H1 (cell line): ENCODE measurements at regions of chr3 and their contacts with region 1.

Region 1: DNA sequence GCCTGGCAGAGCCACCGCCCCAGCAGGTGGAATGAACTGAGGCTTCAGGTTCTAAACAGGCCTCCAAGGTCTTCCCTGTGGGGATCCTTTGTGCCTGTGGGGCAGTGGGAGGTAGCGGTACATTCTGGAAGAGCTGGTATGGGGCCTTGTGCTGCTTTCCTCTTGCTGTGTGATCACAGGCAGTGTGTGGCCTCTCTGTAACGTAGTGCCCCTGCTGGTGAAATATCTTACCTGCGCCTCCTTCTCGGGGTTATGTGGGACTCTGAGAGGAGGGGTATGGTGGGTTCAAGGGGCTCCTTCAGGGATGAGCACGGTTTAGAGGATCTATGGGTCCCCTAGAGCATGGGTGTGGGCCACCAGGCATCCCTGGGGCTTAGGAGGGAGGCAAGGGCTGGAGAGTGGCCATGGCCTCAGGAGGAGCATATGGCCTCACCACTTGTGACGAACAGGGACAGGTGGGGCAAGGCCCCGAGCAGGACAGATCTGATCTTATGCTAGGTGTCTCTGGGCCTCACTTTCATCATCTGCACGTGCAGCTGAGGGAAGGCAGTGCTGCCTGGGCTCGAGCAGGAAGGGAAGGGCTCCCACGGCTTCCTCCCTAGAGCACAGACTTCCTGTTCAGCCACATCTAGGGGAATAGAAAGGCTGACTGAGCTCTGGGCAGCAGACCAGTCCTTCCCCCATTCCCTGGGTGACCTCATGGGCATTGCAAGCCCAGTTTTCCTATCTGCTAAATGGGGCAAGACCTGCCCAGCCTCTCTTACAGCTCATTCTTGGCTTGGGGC is 1.9 kb upstream of the ALS2CL start:
- DNase-seq: peak in 1 of 2 experiments; percentile 78
- H3K4me3 ChIP-seq: no peak overlapping the region
- H3K27ac ChIP-seq: no peak overlapping the region
- H3K4me1 ChIP-seq: peaks cover 0 to 24% (median 19%) of the 10 kb centered on the region in 4 experiments; a peak in 6 of 7 replicates
- H3K27me3 ChIP-seq: peaks cover 2 to 35% (median 21%) of the 10 kb centered on the region in 4 experiments
- CTCF ChIP-seq: peak in 2 of 3 experiments; percentile 71 to 86; a peak in 3 of 4 replicates
- EP300 ChIP-seq: no peak
- POLR2A ChIP-seq: no peak
- RAD21 ChIP-seq: peak; percentile 52 to 62

Region 2: GRCh38 chr3:46674031-46674845 is 21.1 kb before region 1 on chr3:
- CTCF ChIA-PET with region 1: interaction called, 64 read pairs
- POLR2A ChIA-PET with region 1: interaction called, 6 read pairs
- DNase-seq: no peak
- H3K4me3 ChIP-seq: no peak overlapping the region
- H3K27ac ChIP-seq: no peak overlapping the region
- H3K4me1 ChIP-seq: no peaks in the 10 kb centered on the region; a peak in 1 of 7 replicates
- H3K27me3 ChIP-seq: no peaks in the 10 kb centered on the region
- CTCF ChIP-seq: peak in 2 of 3 experiments; percentile 30 to 53; a peak in 2 of 4 replicates
- EP300 ChIP-seq: no peak
- POLR2A ChIP-seq: no peak
- RAD21 ChIP-seq: peak; percentile 1 to 35; a peak in 1 of 4 replicates

Region 3: DNA sequence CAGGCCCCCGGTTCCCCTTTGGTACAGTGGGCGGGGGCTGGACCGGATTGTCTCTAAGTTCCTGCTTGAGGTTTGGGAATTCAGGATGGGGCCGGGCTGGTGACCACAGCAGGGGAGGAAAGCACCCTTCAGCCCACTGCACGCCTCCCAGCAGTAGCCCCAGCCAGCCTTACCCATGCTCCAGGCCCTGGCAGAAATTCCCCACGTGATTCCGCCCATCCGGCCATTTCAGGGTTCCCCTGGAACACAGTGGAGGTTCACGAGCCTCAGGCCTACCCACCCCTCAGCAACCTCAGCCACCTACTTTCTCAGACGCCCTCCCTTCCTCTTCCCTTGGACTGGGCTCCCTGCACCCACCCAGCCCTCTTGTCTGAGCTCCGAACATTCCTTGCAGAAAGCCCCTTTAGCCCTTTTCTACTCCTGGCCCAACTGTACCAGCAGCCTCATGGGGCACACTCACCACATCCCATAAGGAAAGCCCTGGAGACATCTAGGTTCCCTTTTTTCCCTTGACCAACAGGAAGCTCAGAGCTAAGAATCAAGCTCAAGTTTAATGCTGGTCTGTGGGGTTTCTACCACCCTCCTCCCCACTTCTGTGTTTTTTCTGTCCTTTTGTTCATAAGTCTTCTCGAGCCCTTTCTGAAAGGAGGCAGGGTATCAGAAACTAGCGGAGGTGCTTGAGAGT is 13.4 kb before region 1 on chr3:
- CTCF ChIA-PET with region 1: interaction called, 64 read pairs
- POLR2A ChIA-PET with region 1: no interaction called
- DNase-seq: no peak
- H3K4me3 ChIP-seq: no peak overlapping the region
- H3K27ac ChIP-seq: no peak overlapping the region
- H3K4me1 ChIP-seq: peaks cover 0 to 3% (median 0%) of the 10 kb centered on the region in 4 experiments; a peak in 1 of 7 replicates
- H3K27me3 ChIP-seq: no peaks in the 10 kb centered on the region
- CTCF ChIP-seq: no peak
- EP300 ChIP-seq: no peak
- POLR2A ChIP-seq: no peak
- RAD21 ChIP-seq: no peak

Region 4: DNA sequence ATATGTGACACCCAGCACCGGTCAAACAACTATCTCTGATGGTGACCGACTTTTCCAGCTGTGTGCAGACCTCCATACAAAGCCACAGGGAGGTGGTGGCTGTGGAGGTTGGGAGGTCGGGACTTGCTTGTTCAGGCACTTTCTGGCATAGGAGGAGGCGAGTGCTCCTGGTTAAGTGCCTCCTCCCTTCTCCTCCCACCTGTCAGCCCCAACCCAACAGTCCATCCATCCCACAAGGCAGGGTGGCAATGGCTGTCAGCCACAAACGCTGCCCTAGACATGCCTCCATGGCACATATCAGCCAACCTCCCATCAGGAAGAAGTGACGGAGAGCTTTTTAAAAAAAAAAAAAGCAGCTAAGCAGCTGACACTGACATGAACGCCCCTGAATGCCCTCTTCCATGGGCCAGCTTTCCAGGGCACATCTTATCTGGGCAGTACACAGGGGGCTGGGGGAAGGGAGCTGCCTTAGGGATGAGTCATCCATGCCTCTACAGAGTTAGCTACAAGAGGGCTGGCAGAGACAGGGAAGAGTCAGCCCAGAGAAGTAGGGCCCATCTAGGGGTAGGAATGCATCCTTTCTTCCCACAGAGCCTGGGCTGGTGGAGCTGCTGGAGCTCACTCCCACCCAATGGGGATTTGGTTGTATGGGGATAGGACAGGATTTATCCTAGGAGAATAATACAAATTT is 239.9 kb after region 1 on chr3:
- CTCF ChIA-PET with region 1: no interaction called
- POLR2A ChIA-PET with region 1: no interaction called
- DNase-seq: peak in 1 of 2 experiments; percentile 64
- H3K4me3 ChIP-seq: 0 out of 8 replicates have a peak overlapping the region, but pooled peaks of 1 of the 4 experiments have one; percentile 17
- H3K27ac ChIP-seq: peak overlapping the region; percentile 53; the same call in 1 of the 2 replicates
- H3K4me1 ChIP-seq: peaks cover 4 to 14% (median 10%) of the 10 kb centered on the region in 4 experiments; a peak in 6 of 7 replicates
- H3K27me3 ChIP-seq: no peaks in the 10 kb centered on the region
- CTCF ChIP-seq: peak; percentile 52 to 72 (median 60)
- EP300 ChIP-seq: no peak
- POLR2A ChIP-seq: no peak
- RAD21 ChIP-seq: peak; percentile 40 to 47